ENCODE measurements at regions of chr2 and their contacts with region 1.

Region 1: GRCh38 chr2:47072018-47072691 is 83.0 kb downstream of the STPG4 start:
- H3K4me3 Mint-ChIP-seq: peak overlapping the region; percentile 37
- H3K27ac Mint-ChIP-seq: peak overlapping the region; percentile 98
- H3K4me1 Mint-ChIP-seq: peaks cover 99% of the 10 kb centered on the region
- H3K27me3 Mint-ChIP-seq: no peaks in the 10 kb centered on the region

Region 2: GRCh38 chr2:46857893-46858701 is 214.1 kb before region 1 on chr2:
- intact Hi-C with region 1: no loop called
- H3K4me3 Mint-ChIP-seq: no peak overlapping the region
- H3K27ac Mint-ChIP-seq: no peak overlapping the region
- H3K4me1 Mint-ChIP-seq: no peaks in the 10 kb centered on the region
- H3K27me3 Mint-ChIP-seq: peaks cover 3% of the 10 kb centered on the region

Region 3: DNA sequence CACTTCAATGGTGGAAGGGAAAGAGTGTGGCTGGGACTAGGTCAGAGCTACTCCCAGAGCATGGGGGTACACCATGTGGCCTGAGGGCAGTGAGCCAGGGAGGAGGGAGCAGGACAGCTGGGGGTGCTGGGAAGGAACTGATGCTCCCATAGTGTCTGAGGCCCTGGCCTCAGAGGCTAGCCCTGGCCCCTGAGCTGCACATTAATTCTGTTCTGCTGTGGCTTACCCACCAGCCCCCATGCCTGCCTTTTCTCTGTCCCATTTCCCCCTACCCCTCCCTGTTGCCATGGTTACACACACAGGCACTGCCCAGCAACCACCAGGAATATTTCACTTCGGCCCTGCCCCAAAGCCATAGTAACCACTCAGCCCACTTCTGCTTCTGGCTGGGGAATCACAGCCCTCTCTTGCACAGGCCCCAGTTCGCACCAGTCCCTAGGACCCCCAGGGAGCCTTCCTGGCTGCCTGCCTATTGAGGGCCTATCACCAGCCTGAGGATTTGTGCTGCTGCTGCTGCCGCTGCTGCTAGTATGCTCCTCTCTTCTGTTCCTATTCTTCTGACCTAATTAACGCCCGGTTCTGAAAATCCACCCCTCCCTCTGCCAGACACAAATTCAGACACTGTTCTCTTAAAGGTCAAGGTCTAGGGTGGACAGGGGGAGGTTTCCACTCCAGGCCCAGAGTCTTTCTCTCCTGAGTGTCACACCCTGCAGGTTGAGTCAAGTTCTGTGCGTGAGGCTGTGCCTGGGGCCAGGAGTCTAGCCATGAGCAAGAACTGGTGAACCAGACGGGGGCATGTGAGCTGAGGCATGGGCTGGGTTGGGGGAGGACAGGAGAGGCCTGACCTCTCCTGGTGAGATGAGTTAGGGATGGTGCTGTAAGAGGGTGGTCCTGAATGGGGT is 69.4 kb before region 1 on chr2:
- intact Hi-C with region 1: no loop called
- H3K4me3 Mint-ChIP-seq: no peak overlapping the region
- H3K27ac Mint-ChIP-seq: peak overlapping the region; percentile 81
- H3K4me1 Mint-ChIP-seq: peaks cover 47% of the 10 kb centered on the region
- H3K27me3 Mint-ChIP-seq: no peaks in the 10 kb centered on the region

Region 4: GRCh38 chr2:47029737-47030524 is 42.2 kb before region 1 on chr2:
- intact Hi-C with region 1: no loop called
- H3K4me3 Mint-ChIP-seq: no peak overlapping the region
- H3K27ac Mint-ChIP-seq: peak overlapping the region; percentile 94
- H3K4me1 Mint-ChIP-seq: peaks cover 77% of the 10 kb centered on the region
- H3K27me3 Mint-ChIP-seq: no peaks in the 10 kb centered on the region

Region 5: DNA sequence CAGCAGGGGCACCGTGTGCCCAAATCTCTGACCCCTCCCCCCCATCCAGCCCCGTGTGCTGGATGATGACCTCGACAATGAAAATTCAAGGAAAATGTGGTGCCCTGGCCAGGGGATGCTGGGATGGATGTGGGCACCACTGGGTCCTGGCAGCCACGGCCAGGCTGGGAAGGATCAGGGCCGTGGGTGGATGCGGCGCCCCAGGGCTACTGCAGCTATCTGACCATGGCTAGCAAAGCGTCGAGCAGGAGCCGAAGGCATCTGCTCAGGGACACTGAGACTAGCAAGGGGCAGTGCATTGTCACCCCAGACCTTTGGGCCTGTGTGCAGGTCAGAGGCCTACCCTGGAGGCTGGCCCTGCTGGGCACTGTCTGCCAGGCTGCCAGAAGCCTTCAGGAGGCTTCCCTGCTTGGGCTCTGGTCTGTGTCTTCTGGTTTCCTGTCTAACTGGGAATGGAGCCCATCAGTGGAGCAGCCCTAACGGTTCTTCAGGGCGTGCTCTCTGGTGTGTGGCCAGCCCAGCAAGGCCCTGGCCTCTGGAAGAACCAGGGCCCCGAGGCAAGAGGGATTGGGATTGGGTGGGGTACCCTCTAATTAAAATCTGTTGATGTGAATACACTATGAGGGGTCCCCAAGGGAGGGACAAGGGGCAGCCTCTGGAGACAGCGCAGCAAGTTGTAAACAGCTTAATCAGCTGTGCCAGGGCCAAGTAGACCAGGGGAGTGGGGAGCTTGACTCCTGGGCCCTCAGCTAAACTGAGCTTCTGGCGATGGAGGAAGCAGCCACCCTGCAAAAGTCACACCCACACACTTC is 15.1 kb before region 1 on chr2:
- intact Hi-C with region 1: loop called (anchors 2 kb)
- H3K4me3 Mint-ChIP-seq: peak overlapping the region; percentile 21
- H3K27ac Mint-ChIP-seq: peak overlapping the region; percentile 93
- H3K4me1 Mint-ChIP-seq: peaks cover 96% of the 10 kb centered on the region
- H3K27me3 Mint-ChIP-seq: no peaks in the 10 kb centered on the region

Region 6: GRCh38 chr2:47295981-47296635 is 224.0 kb after region 1 on chr2:
- intact Hi-C with region 1: loop called (anchors 1 kb)
- H3K4me3 Mint-ChIP-seq: no peak overlapping the region
- H3K27ac Mint-ChIP-seq: peak overlapping the region; percentile 87
- H3K4me1 Mint-ChIP-seq: peaks cover 68% of the 10 kb centered on the region
- H3K27me3 Mint-ChIP-seq: no peaks in the 10 kb centered on the region

Measured in dendritic cell treated with granulocyte-macrophage colony-stimulating factor and Interleukin-4, amounts not matched to agents 40 ng/mL and 50 ng/mL, for 4 days (primary cell).